H1 (cell line): ENCODE measurements at regions of chr14 and their contacts with region 1.

Region 1: GRCh38 chr14:29222671-29223268 is 456.2 kb downstream of the FOXG1 start:
- DNase-seq: no peak
- H3K4me3 ChIP-seq: no peak overlapping the region
- H3K27ac ChIP-seq: no peak overlapping the region
- H3K4me1 ChIP-seq: no peaks in the 10 kb centered on the region
- H3K27me3 ChIP-seq: no peaks in the 10 kb centered on the region
- CTCF ChIP-seq: peak in 2 of 3 experiments; percentile 56 to 70; a peak in 3 of 4 replicates
- EP300 ChIP-seq: no peak
- POLR2A ChIP-seq: no peak
- RAD21 ChIP-seq: peak; percentile 66 to 72

Region 2: DNA sequence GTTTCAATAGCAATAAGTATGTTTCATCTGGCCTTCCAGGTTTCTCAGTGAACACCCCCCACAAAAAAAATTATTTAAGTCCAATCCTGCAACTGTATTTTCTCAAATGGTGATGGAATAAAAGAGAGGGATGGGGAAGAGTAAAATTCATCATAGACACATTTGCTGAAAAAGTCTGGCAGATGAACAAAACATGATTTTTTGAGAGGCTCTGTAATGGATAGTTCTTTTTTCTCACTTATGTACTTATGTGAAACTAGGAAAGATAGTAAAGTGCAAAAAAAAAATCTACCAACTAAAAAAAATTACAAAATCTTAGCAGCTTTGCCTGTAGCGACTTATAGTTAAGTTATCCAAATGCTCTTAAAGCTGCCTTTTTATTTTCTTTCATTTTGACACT is 43.8 kb before region 1 on chr14:
- CTCF ChIA-PET with region 1: no interaction called
- POLR2A ChIA-PET with region 1: no interaction called
- DNase-seq: no peak
- H3K4me3 ChIP-seq: no peak overlapping the region
- H3K27ac ChIP-seq: no peak overlapping the region
- H3K4me1 ChIP-seq: no peaks in the 10 kb centered on the region
- H3K27me3 ChIP-seq: no peaks in the 10 kb centered on the region
- CTCF ChIP-seq: no peak
- EP300 ChIP-seq: no peak
- POLR2A ChIP-seq: no peak
- RAD21 ChIP-seq: no peak

Region 3: DNA sequence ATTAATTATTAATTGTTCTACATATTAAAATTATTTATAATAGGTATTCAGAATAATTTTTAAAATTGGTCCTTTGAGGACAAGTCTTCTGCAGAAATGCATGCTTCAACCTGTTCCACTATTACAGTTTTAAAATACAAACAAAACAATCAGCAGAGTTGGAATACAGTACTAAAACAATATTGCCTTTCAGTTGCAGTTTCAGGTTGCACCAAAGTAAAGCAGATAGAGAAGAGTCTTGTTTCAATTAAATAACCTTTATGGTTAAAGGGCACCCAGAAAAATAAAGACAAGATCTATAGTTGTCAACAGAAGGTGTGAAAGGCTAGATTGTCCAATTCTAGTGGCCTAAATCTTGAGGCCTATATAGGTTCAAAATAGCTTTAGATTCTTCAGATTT is 31.7 kb before region 1 on chr14:
- CTCF ChIA-PET with region 1: no interaction called
- POLR2A ChIA-PET with region 1: no interaction called
- DNase-seq: no peak
- H3K4me3 ChIP-seq: no peak overlapping the region
- H3K27ac ChIP-seq: no peak overlapping the region
- H3K4me1 ChIP-seq: no peaks in the 10 kb centered on the region
- H3K27me3 ChIP-seq: no peaks in the 10 kb centered on the region
- CTCF ChIP-seq: no peak
- EP300 ChIP-seq: no peak
- POLR2A ChIP-seq: no peak
- RAD21 ChIP-seq: no peak

Region 4: DNA sequence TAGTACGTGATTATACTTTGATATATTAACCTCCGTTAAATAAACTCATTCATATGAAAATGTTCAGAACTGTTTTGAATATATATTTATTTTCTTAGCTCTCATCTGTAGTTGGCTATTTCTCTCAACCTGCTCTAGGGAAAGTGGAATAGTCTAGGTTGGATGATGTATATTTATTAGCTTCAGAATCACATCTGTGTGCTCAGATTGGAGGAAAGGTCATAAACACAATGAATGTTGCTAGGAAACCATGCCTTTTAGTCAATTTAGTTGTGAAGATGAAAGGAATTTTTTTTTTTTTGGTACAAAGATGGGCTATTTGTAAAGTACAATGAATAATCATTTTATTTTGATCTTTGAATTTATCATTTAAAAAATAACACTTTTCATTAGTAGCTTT is 17.1 kb before region 1 on chr14:
- CTCF ChIA-PET with region 1: interaction called, 17 read pairs
- POLR2A ChIA-PET with region 1: no interaction called
- DNase-seq: no peak
- H3K4me3 ChIP-seq: no peak overlapping the region
- H3K27ac ChIP-seq: no peak overlapping the region
- H3K4me1 ChIP-seq: no peaks in the 10 kb centered on the region
- H3K27me3 ChIP-seq: peaks cover 0 to 1% (median 0%) of the 10 kb centered on the region in 4 experiments; a peak in 1 of 7 replicates
- CTCF ChIP-seq: no peak
- EP300 ChIP-seq: no peak
- POLR2A ChIP-seq: no peak
- RAD21 ChIP-seq: no peak